Activated CD4-positive, alpha-beta memory T cell treated with anti-CD3 and anti-CD28 coated beads for 36 hours (primary cell): ENCODE measurements at regions of chr14 and their contacts with region 1.

Region 1: DNA sequence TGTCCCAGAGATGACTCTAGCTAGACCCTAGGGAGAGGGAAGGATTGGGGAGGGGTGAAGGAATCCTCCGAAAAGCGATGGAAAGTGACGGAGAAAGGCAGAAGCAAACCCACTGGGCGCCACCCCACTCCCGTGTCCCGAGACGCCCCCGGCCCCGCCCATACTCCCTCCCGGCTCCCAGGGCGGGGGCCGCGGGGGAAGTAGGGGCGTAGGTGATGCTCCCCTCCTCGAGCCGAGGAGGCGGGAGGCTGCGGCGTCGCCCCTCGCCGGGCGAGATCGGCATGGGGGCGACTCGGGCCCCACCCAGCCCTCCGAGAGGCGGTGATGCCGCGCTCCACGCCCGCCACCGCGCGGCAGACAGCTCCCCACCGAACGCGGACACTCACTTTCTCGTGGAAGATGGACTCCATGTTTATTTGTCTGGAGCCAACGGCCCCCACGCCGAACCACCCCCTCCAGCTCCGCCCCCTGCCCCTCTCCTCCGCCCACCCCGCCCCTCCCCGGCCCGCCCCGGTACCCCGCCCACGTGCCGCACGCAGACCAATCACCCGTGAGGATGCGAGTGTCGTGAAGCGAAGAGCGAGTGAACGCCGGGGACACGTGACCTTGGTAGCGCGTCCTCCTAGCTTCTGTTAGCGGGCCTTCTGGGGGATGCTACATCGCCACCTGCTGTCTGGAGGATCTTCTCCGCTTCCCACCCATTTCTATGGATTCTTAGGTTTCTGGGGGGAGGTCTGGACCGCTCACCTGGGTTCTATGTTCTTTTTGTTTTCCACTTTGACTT is at the start of gene ATXN3:
- DNase-seq: peak; percentile 97
- H3K4me3 Mint-ChIP-seq: peak within 1 kb of the TSS; percentile 93
- H3K27ac Mint-ChIP-seq: peak within 1 kb of the TSS; percentile 78
- H3K4me1 Mint-ChIP-seq: peaks cover 42% of the 10 kb centered on the region
- H3K27me3 Mint-ChIP-seq: no peaks in the 10 kb centered on the region
- total RNA-seq, gene ATXN3: 30.8 to 31.6 TPM

Region 2: GRCh38 chr14:92039719-92040430 is 66.5 kb before region 1 on chr14 and contains the start of gene TRIP11:
- CTCF ChIA-PET with region 1: interaction called, 13 read pairs
- POLR2A ChIA-PET with region 1: interaction called, 15 read pairs
- intact Hi-C with region 1: loop called (anchors 1 kb)
- DNase-seq: peak; percentile 97
- H3K4me3 Mint-ChIP-seq: peak within 1 kb of the TSS; percentile 90
- H3K27ac Mint-ChIP-seq: peak within 1 kb of the TSS; percentile 93
- H3K4me1 Mint-ChIP-seq: peaks cover 31% of the 10 kb centered on the region
- H3K27me3 Mint-ChIP-seq: no peaks in the 10 kb centered on the region
- total RNA-seq, gene TRIP11: 35.9 to 37.0 TPM

Region 3: DNA sequence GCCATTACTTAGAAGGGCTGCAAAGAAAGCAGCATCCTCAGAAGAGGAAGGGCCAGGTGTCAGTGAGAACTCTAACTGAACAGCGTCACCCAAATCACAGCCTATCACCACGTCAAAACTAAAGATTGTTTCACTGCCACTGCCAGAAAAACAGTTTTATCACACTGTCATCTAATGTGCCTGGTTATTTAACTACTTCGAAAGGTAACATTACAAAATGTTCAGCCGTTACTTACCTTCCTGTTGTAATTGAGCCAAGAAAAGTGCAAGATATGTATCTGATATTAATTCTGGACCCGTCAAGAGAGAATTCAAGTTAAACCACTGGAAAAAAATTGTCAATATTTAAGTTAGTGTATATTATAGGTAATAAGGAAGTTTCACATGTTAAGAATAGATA is 17.8 kb before region 1 on chr14:
- CTCF ChIA-PET with region 1: interaction called, 10 read pairs
- POLR2A ChIA-PET with region 1: no interaction called
- intact Hi-C with region 1: no loop called
- DNase-seq: no peak
- H3K4me3 Mint-ChIP-seq: no peak overlapping the region
- H3K27ac Mint-ChIP-seq: no peak overlapping the region
- H3K4me1 Mint-ChIP-seq: no peaks in the 10 kb centered on the region
- H3K27me3 Mint-ChIP-seq: no peaks in the 10 kb centered on the region

Region 4: GRCh38 chr14:92121670-92122350 is 15.5 kb after region 1 on chr14 and contains the starts of genes CPSF2 and NDUFB1:
- CTCF ChIA-PET with region 1: interaction called, 132 read pairs
- POLR2A ChIA-PET with region 1: interaction called, 52 read pairs
- intact Hi-C with region 1: loop called (anchors 2 kb)
- DNase-seq: peak; percentile 88
- H3K4me3 Mint-ChIP-seq: peak within 1 kb of the TSS; percentile 94
- H3K27ac Mint-ChIP-seq: peak within 1 kb of the TSS; percentile 97
- H3K4me1 Mint-ChIP-seq: peaks cover 27% of the 10 kb centered on the region
- H3K27me3 Mint-ChIP-seq: no peaks in the 10 kb centered on the region
- total RNA-seq, gene CPSF2: 100 to 105 TPM
- total RNA-seq, gene NDUFB1: 131 to 143 TPM